Breast epithelium (tissue), 4 donors: ENCODE measurements at regions of chrX and their contacts with region 1.

Region 1: GRCh38 chrX:18613930-18614639 is 57.8 kb downstream of the RS1 start:
- DNase-seq: no peak
- H3K4me3 ChIP-seq: no peak overlapping the region
- H3K27ac ChIP-seq: no peak overlapping the region
- H3K4me1 ChIP-seq: no peaks in the 10 kb centered on the region
- H3K27me3 ChIP-seq: peaks cover 0 to 14% of the 10 kb centered on the region in 2 donors
- CTCF ChIP-seq: no peak
- POLR2A ChIP-seq: no peak

Region 2: DNA sequence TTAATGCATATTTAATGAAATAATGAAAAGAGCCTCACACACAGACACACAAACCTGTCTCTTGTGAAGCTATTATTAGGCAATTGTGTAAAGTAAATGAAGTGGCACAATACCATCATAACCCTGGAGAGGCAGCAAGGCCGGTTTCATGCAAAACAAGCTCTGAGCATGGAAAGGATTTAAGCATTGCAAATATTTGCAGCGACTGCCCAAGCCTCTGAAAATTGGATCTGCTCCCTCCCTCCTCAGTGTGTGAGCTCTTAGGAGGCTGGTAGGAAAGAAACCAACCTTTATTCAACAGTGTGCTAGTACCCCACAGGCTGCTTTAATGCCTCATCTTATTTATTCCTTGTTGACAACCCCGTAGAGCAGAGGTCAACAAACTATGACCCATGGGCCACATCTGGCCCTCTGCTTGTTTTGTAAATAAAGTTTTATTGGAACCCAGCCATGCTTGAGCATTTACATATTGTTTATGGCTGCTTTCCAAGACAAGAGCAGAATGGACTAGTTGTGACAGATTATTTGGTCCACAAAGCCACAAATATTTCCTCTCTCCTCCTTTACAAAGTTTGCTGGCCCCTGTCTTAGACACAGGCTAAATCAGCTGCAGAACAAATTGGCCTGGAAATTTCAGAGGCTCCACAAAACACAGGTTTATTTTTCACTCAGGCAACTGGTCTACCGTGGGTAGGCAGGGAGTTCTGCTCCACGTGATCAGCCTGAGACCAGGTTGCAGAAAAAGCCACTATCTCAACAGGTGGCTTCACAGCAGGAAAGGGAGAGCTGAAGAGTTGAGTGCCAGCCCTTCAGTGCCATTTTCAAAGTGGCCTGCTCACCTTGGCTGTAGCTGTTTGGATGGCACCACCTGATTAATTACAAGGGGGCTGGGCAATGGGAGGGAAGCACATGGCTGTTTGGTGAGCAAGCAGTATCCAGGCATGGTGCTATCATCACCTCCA is 41.1 kb after region 1 on chrX:
- intact Hi-C with region 1: no loop called
- DNase-seq: peak in 1 of 2 donors; percentile 37
- H3K4me3 ChIP-seq: no peak overlapping the region
- H3K27ac ChIP-seq: no peak overlapping the region
- H3K4me1 ChIP-seq: no peaks in the 10 kb centered on the region
- H3K27me3 ChIP-seq: peaks cover 0 to 1% of the 10 kb centered on the region in 2 donors
- CTCF ChIP-seq: no peak
- POLR2A ChIP-seq: no peak

Region 3: DNA sequence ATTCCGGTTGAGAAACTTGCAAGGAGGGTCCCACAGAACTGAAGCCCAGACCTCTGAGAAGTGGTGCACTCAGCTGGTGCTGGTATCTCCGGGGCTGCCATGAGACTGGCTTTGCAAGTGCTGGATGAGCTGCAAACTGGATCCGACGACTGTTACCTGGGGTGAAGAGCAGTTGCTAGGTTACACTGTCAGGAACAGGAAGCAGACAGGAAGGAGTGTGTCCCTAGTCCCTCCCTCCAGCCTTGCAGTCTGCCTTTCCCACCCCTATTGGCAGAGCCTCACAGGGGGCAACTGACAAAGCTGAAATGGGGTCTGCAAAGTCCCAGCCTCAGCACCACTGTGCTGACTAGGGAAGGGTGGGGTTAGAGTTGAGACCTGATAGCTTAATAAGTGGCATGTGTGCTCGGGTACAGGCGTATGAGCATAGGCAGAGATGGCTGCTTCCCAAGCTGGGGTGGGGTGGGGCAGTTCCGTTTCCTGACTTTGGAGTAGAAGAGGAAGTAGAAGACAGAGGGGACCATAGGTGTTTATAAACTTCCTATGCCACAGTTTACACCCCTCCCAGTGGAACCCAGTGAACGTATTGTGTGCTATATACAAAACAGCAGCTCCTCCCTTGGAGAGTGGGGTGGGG is 111.3 kb after region 1 on chrX:
- intact Hi-C with region 1: loop called (anchors 5 kb)
- DNase-seq: no peak
- H3K4me3 ChIP-seq: no peak overlapping the region
- H3K27ac ChIP-seq: no peak overlapping the region
- H3K4me1 ChIP-seq: no peaks in the 10 kb centered on the region
- H3K27me3 ChIP-seq: peaks cover 0 to 27% of the 10 kb centered on the region in 2 donors
- CTCF ChIP-seq: no peak
- POLR2A ChIP-seq: no peak